ENCODE measurements at regions of chr6 and their contacts with region 1.

Region 1: DNA sequence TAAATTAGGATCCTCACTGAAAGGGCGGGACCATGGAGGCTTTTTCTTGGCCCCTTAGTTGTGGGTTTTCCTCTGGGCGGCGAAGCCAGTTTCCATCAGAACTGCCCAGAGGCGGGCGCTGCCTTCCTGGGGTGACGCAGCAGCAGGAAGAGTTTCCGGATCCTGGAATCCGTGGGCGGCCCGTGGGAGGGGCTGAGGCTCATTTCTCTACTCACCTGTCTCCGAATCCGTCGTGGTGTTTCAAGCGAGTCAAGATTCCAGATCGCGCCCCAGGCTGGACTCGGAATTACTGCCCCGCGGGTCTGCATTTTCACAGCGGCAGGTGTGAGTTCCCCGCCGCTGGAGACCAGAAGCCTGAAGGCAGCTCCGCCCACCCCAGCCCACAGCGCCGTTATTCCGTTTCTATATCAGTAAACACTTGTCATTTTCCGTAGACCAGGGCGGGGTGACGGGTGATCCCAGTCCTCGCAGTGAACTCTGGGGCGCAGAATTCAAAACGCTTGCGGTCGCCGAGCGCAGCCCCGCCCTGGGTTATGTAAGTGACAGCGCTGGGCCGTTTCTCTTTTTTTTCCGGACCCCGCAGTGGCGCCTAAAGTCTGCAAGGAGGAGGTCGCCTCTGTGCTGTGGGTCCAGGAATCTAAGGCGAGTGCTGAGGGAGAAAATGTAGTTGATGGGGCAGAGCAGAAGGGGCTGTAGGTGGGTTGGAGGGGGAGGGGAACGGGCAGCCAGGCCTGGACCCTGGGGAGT is 27.2 kb upstream of the POU5F1 start:
- DNase-seq: peak; percentile 70
- ATAC-seq: peak; percentile 42
- H3K4me3 Mint-ChIP-seq: peak overlapping the region; percentile 83
- H3K27ac Mint-ChIP-seq: no peak overlapping the region
- H3K4me1 Mint-ChIP-seq: peaks cover 6% of the 10 kb centered on the region
- H3K27me3 Mint-ChIP-seq: no peaks in the 10 kb centered on the region; the same call in 1 of the 2 replicates
- CTCF ChIP-seq: no peak

Region 2: DNA sequence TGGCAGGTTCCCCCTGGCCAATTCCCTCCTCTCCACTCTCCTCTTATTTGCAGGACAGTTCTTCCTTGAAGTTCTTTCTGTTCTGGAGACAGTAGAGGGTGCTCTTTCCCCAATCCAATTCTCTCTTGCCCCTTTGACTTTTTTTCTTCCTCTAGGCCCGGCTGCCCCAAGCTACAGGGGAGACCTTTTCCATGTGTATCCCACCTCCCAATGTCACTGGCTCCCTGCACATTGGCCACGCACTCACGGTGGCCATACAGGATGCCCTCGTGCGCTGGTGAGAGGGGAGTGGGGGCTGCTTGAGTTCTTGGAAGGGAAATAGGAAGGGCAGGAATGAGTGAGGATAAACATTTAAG is 282.2 kb before region 1 on chr6:
- CTCF ChIA-PET with region 1: no interaction called
- POLR2A ChIA-PET with region 1: no interaction called
- DNase-seq: peak; percentile 29
- ATAC-seq: peak; percentile 62
- H3K4me3 Mint-ChIP-seq: peak overlapping the region; percentile 54
- H3K27ac Mint-ChIP-seq: peak overlapping the region; percentile 85
- H3K4me1 Mint-ChIP-seq: peaks cover 22% of the 10 kb centered on the region
- H3K27me3 Mint-ChIP-seq: no peaks in the 10 kb centered on the region
- CTCF ChIP-seq: 0 out of 2 replicates have a peak, but pooled peaks have one; percentile 20

Region 3: GRCh38 chr6:31128093-31128676 is 69.5 kb before region 1 on chr6:
- CTCF ChIA-PET with region 1: interaction called, 11 read pairs
- POLR2A ChIA-PET with region 1: no interaction called
- DNase-seq: peak; percentile 88
- ATAC-seq: peak; percentile 75
- H3K4me3 Mint-ChIP-seq: no peak overlapping the region
- H3K27ac Mint-ChIP-seq: peak overlapping the region; percentile 2; the same call in 1 of the 2 replicates
- H3K4me1 Mint-ChIP-seq: peaks cover 42% of the 10 kb centered on the region
- H3K27me3 Mint-ChIP-seq: peaks cover 10% of the 10 kb centered on the region
- CTCF ChIP-seq: peak; percentile 90

Region 4: DNA sequence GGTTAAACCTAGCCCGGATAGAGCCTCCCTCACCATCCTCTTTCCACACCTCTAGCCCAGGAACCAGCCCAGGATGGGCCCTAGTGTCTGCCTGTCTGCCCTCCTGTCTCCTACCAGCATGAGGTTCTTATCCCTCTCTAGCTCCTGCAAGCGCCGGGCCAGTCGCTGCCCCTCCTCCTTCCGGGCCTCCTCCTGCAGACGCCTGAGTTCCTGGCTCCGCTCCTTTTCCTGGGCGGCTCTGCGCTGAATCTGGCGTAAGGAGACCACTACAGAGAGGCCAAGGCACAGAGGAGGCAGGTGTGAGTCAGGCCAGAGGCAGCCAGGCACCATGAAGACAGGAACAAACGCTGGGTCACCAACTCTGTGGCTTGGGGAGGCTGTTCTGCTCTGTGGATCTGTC is 54.6 kb before region 1 on chr6:
- CTCF ChIA-PET with region 1: interaction called, 49 read pairs
- POLR2A ChIA-PET with region 1: no interaction called
- DNase-seq: no peak
- ATAC-seq: peak; percentile 53
- H3K4me3 Mint-ChIP-seq: no peak overlapping the region
- H3K27ac Mint-ChIP-seq: peak overlapping the region; percentile 76; the same call in 1 of the 2 replicates
- H3K4me1 Mint-ChIP-seq: peaks cover 38% of the 10 kb centered on the region
- H3K27me3 Mint-ChIP-seq: peaks cover 4% of the 10 kb centered on the region
- CTCF ChIP-seq: no peak

Region 5: GRCh38 chr6:31158140-31158862 is 39.4 kb before region 1 on chr6 and contains the start of gene TCF19:
- CTCF ChIA-PET with region 1: interaction called, 12 read pairs
- POLR2A ChIA-PET with region 1: no interaction called
- DNase-seq: peak; percentile 99
- ATAC-seq: peak; percentile 76
- H3K4me3 Mint-ChIP-seq: peak within 1 kb of the TSS; percentile 96
- H3K27ac Mint-ChIP-seq: peak within 1 kb of the TSS; percentile 93
- H3K4me1 Mint-ChIP-seq: peaks cover 40% of the 10 kb centered on the region
- H3K27me3 Mint-ChIP-seq: no peaks in the 10 kb centered on the region
- CTCF ChIP-seq: no peak
- total RNA-seq, gene TCF19: 10.2 to 12.7 TPM (median 10.7 TPM) in 3 replicates

Region 6: DNA sequence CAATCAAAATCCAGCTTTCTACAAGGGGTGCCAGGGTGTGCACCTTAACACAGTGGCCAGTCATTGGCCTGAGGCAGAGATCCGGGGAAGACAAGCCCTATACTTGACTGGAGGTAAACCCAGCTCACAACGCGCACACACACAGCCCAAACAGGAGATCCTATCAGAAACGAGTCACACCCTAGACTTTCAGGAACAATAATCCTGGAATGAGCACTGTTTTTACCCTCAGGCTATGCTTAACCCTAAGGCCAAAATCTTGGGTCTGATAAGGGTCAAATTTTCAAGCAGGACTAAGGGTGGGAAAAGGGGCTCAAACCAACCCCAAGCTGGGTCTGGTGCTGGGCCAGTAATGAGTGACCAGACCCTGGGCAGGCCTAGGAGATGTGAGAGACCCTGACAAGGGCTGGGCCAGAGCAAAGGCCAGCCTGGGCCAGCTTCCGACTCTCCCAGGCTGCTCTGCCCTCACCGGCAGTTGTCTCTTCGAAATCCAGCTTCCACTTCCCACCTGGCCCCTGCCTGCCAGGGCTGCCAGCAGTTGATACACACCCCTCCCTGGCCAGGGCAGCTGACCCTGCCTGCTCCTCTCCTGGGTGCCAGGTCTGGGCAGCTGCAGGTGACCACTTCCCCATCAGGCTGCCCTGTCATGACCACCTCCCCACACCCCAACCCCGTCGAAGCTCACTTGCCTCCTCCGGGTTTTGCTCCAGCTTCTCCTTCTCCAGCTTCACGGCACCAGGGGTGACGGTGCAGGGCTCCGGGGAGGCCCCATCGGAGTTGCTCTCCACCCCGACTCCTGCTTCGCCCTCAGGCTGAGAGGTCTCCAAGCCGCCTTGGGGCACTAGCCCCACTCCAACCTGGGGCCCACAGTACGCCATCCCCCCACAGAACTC is 28.0 kb before region 1 on chr6:
- CTCF ChIA-PET with region 1: interaction called, 60 read pairs
- POLR2A ChIA-PET with region 1: no interaction called
- DNase-seq: no peak
- ATAC-seq: no peak
- H3K4me3 Mint-ChIP-seq: peak overlapping the region; percentile 97
- H3K27ac Mint-ChIP-seq: peak overlapping the region; percentile 91
- H3K4me1 Mint-ChIP-seq: peaks cover 65% of the 10 kb centered on the region
- H3K27me3 Mint-ChIP-seq: no peaks in the 10 kb centered on the region
- CTCF ChIP-seq: no peak

Measured in WTC11 (cell line).